B cell (primary cell): ENCODE measurements at regions of chr4 and their contacts with region 1.

Region 1: DNA sequence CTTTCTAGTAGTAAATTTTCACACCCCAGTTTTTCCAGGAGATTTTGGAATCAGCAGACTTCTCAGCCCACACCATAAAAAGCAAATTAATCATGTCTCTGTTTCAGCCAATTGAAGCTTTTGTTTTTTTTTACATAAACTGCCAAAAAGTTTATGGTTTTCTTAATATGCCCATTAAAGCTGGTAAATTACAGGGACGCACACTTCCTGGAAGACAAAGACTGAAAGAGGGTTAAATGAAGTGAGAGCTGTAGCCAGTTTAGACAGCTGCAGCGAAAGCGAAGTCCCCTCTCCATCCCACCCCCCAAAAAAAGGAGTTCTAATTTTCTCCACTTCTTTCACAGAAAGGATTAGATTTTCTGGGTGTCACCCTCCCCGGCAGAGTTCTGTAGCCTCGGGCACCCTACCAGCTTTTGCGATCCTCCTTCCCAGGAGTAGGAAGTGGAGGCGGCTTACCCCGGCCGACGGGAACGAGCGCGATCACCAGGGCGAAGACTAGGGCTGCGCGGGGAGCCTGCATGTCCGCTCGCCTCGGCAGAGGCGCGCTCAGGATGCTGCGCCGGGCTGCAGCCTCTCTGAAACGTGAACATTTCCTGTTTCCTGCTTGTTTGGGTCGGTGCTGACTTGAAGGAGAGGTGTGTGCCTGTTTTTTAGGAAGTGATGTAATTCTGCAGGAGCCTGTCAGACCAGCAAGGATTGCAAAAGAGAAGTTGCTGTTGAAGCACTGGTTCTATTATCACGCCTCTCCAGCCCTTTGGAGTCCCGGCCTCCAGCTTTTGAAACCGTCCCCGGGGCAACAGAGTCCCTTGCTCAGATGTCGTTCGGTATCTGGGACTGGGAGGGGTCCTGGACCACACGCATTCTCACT is at the start of gene TMEM154:
- DNase-seq: peak; percentile 89
- ATAC-seq: peak; percentile 89
- H3K4me3 ChIP-seq: peak within 1 kb of the TSS; percentile 60 to 97 (median 85)
- H3K4me3 Mint-ChIP-seq: peak within 1 kb of the TSS; percentile 92
- H3K27ac ChIP-seq: peak within 1 kb of the TSS; percentile 73 to 81
- H3K27ac Mint-ChIP-seq: peak within 1 kb of the TSS; percentile 97
- H3K4me1 ChIP-seq: peaks cover 61 to 69% of the 10 kb centered on the region in 2 donors
- H3K4me1 Mint-ChIP-seq: peaks cover 76% of the 10 kb centered on the region
- H3K27me3 ChIP-seq: no peaks in the 10 kb centered on the region
- H3K27me3 Mint-ChIP-seq: no peaks in the 10 kb centered on the region
- CTCF ChIP-seq: no peak
- total RNA-seq, gene TMEM154: 96.6 and 99.1 TPM in 2 replicates

Region 2: GRCh38 chr4:152655272-152656129 is 24.1 kb before region 1 on chr4:
- CTCF ChIA-PET with region 1: interaction called, 10 read pairs
- POLR2A ChIA-PET with region 1: no interaction called
- intact Hi-C with region 1: loop called (anchors 1 kb)
- DNase-seq: no peak
- ATAC-seq: no peak
- H3K4me3 ChIP-seq: no peak overlapping the region
- H3K4me3 Mint-ChIP-seq: no peak overlapping the region
- H3K27ac ChIP-seq: peak overlapping the region in 1 of 2 donors; percentile 28
- H3K27ac Mint-ChIP-seq: peak overlapping the region; percentile 78
- H3K4me1 ChIP-seq: peaks cover 38 to 41% of the 10 kb centered on the region in 2 donors
- H3K4me1 Mint-ChIP-seq: peaks cover 48% of the 10 kb centered on the region
- H3K27me3 ChIP-seq: no peaks in the 10 kb centered on the region
- H3K27me3 Mint-ChIP-seq: no peaks in the 10 kb centered on the region
- CTCF ChIP-seq: no peak

Region 3: DNA sequence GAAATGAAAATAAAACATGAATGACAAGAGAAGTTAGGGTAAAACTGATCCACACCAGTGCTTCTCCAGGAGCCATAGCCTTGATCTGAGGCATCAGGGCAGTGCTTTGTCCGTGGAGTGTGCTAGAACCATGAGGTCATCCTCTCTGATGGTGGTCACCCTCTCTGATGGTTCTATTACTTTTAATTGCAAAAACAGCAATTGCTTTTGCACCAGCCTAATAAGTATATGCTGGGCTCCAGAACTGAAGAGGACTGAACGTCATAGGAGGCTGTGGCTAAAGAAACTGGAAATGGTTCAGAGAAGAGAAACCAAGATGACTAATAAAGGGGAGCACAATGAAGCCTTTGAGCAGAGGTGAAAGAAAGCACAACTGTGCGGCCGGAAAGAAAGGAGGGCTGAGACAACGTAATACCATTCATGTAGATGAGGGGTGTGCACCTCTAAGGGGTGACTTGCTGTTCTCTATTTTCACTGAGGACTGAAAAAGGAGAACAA is 17.2 kb after region 1 on chr4:
- CTCF ChIA-PET with region 1: interaction called, 3 read pairs
- POLR2A ChIA-PET with region 1: interaction called, 3 read pairs
- intact Hi-C with region 1: loop called (anchors 1 kb)
- DNase-seq: peak; percentile 86
- ATAC-seq: peak; percentile 99
- H3K4me3 ChIP-seq: no peak overlapping the region
- H3K4me3 Mint-ChIP-seq: peak overlapping the region; percentile 55
- H3K27ac ChIP-seq: peak overlapping the region; percentile 55 to 62
- H3K27ac Mint-ChIP-seq: peak overlapping the region; percentile 91
- H3K4me1 ChIP-seq: peaks cover 17 to 30% of the 10 kb centered on the region in 2 donors
- H3K4me1 Mint-ChIP-seq: peaks cover 43% of the 10 kb centered on the region
- H3K27me3 ChIP-seq: no peaks in the 10 kb centered on the region
- H3K27me3 Mint-ChIP-seq: no peaks in the 10 kb centered on the region
- CTCF ChIP-seq: no peak

Region 4: GRCh38 chr4:152779513-152780266 is 100.0 kb after region 1 on chr4 and contains the starts of genes ARFIP1 and TIGD4:
- CTCF ChIA-PET with region 1: interaction called, 4 read pairs
- POLR2A ChIA-PET with region 1: no interaction called
- intact Hi-C with region 1: loop called (anchors 1 kb)
- DNase-seq: peak; percentile 95
- ATAC-seq: peak; percentile 89
- H3K4me3 ChIP-seq: peak within 1 kb of the TSS; percentile 59 to 95 (median 90)
- H3K4me3 Mint-ChIP-seq: peak within 1 kb of the TSS; percentile 98
- H3K27ac ChIP-seq: peak within 1 kb of the TSS; percentile 60 to 79
- H3K27ac Mint-ChIP-seq: peak within 1 kb of the TSS; percentile 93
- H3K4me1 ChIP-seq: peaks cover 20 to 25% of the 10 kb centered on the region in 2 donors
- H3K4me1 Mint-ChIP-seq: peaks cover 51% of the 10 kb centered on the region
- H3K27me3 ChIP-seq: no peaks in the 10 kb centered on the region
- H3K27me3 Mint-ChIP-seq: peaks cover 5% of the 10 kb centered on the region
- CTCF ChIP-seq: peak; percentile 9
- total RNA-seq, gene ARFIP1: 23.5 and 27.0 TPM in 2 replicates
- total RNA-seq, gene TIGD4: 0.36 and 0.59 TPM in 2 replicates

Region 5: GRCh38 chr4:152817331-152817730 is 137.7 kb after region 1 on chr4:
- CTCF ChIA-PET with region 1: no interaction called
- POLR2A ChIA-PET with region 1: no interaction called
- intact Hi-C with region 1: no loop called
- DNase-seq: no peak
- ATAC-seq: no peak
- H3K4me3 ChIP-seq: no peak overlapping the region
- H3K4me3 Mint-ChIP-seq: no peak overlapping the region
- H3K27ac ChIP-seq: no peak overlapping the region
- H3K27ac Mint-ChIP-seq: no peak overlapping the region
- H3K4me1 ChIP-seq: peaks cover 0 to 10% of the 10 kb centered on the region in 2 donors
- H3K4me1 Mint-ChIP-seq: peaks cover 24% of the 10 kb centered on the region
- H3K27me3 ChIP-seq: no peaks in the 10 kb centered on the region
- H3K27me3 Mint-ChIP-seq: no peaks in the 10 kb centered on the region
- CTCF ChIP-seq: no peak